Caco-2 (cell line): ENCODE measurements at regions of chr4 and their contacts with region 1.

Region 1: DNA sequence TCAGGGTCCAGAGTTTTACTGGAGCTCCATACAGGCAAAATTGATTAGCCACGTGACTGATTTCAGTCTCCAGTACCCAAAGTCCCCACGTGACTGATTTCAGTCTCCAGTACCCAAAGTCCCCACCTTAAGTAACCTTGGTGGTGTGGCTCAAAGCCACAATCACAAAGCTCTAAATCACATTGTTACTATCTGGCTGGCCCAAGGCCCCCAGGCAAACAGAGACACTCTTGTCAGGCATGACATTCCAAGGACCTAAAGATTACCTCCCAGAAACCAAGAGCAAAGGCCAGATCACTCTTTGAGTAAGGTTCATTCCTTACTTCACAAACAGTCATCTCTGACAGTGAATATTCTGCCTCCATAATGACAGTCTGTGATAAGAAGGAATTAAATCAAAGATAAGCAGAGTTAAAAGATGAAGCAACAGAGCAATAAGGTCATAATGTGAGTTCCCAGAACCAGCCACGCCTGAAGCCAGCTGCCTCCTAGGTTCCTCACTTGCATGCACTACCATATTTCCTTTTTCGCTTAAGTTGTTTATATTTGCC is 78.5 kb downstream of the ANXA3 start:
- DNase-seq: peak; percentile 84 to 93
- H3K4me3 ChIP-seq: no peak overlapping the region
- H3K4me3 Mint-ChIP-seq: peak overlapping the region; percentile 8
- H3K27ac Mint-ChIP-seq: peak overlapping the region; percentile 61
- H3K4me1 ChIP-seq: peaks cover 60% of the 10 kb centered on the region
- H3K4me1 Mint-ChIP-seq: peaks cover 34% of the 10 kb centered on the region
- H3K27me3 ChIP-seq: no peaks in the 10 kb centered on the region
- H3K27me3 Mint-ChIP-seq: no peaks in the 10 kb centered on the region
- CTCF ChIP-seq: no peak

Region 2: GRCh38 chr4:78551479-78552351 is 78.4 kb before region 1 on chr4 and contains the start of gene ANXA3:
- CTCF ChIA-PET with region 1: no interaction called
- POLR2A ChIA-PET with region 1: no interaction called
- intact Hi-C with region 1: loop called (anchors 1 kb)
- DNase-seq: peak; percentile 87 to 90
- H3K4me3 ChIP-seq: peak within 1 kb of the TSS; percentile 74
- H3K4me3 Mint-ChIP-seq: peak within 1 kb of the TSS; percentile 86
- H3K27ac Mint-ChIP-seq: peak within 1 kb of the TSS; percentile 90
- H3K4me1 ChIP-seq: peaks cover 55% of the 10 kb centered on the region
- H3K4me1 Mint-ChIP-seq: peaks cover 27% of the 10 kb centered on the region
- H3K27me3 ChIP-seq: no peaks in the 10 kb centered on the region
- H3K27me3 Mint-ChIP-seq: no peaks in the 10 kb centered on the region
- CTCF ChIP-seq: no peak
- total RNA-seq, gene ANXA3: 327 and 361 TPM in 2 replicates

Region 3: DNA sequence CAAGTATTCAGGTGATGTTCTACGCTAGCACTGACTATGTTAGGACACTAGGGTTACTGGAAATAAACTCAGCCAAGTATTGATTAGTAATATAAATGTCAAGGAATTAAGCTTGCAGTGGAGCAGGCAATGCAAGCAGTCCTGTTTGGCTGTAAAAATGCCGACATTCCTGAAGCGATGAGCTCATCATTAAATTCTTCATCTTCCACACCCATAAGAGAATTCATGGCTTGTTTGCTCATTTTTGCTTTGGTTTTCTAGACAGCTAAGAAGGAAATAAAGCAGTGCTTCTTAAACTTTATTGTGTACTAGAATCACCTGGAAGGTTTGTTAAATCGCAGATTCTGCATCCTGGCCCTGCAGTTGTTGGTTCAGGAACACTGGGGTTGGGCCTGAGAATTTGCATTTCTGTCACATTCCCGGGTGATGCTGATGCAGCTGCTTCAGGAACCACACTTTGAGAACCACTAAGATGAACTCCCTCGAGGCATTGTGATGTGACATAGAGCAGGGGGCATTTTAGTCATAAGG is 60.7 kb before region 1 on chr4:
- CTCF ChIA-PET with region 1: no interaction called
- POLR2A ChIA-PET with region 1: interaction called, 3 read pairs
- intact Hi-C with region 1: loop called (anchors 1 kb)
- DNase-seq: peak; percentile 65 to 70
- H3K4me3 ChIP-seq: no peak overlapping the region
- H3K4me3 Mint-ChIP-seq: peak overlapping the region; percentile 46
- H3K27ac Mint-ChIP-seq: peak overlapping the region; percentile 85
- H3K4me1 ChIP-seq: peaks cover 63% of the 10 kb centered on the region
- H3K4me1 Mint-ChIP-seq: peaks cover 40% of the 10 kb centered on the region
- H3K27me3 ChIP-seq: no peaks in the 10 kb centered on the region
- H3K27me3 Mint-ChIP-seq: no peaks in the 10 kb centered on the region
- CTCF ChIP-seq: no peak

Region 4: GRCh38 chr4:78612398-78613178 is 17.5 kb before region 1 on chr4:
- CTCF ChIA-PET with region 1: no interaction called
- POLR2A ChIA-PET with region 1: no interaction called
- intact Hi-C with region 1: loop called (anchors 2 kb)
- DNase-seq: no peak
- H3K4me3 ChIP-seq: no peak overlapping the region
- H3K4me3 Mint-ChIP-seq: no peak overlapping the region
- H3K27ac Mint-ChIP-seq: no peak overlapping the region
- H3K4me1 ChIP-seq: peaks cover 9% of the 10 kb centered on the region
- H3K4me1 Mint-ChIP-seq: peaks cover 41% of the 10 kb centered on the region
- H3K27me3 ChIP-seq: no peaks in the 10 kb centered on the region
- H3K27me3 Mint-ChIP-seq: no peaks in the 10 kb centered on the region
- CTCF ChIP-seq: peak in 1 of 2 experiments; percentile 20

Region 5: DNA sequence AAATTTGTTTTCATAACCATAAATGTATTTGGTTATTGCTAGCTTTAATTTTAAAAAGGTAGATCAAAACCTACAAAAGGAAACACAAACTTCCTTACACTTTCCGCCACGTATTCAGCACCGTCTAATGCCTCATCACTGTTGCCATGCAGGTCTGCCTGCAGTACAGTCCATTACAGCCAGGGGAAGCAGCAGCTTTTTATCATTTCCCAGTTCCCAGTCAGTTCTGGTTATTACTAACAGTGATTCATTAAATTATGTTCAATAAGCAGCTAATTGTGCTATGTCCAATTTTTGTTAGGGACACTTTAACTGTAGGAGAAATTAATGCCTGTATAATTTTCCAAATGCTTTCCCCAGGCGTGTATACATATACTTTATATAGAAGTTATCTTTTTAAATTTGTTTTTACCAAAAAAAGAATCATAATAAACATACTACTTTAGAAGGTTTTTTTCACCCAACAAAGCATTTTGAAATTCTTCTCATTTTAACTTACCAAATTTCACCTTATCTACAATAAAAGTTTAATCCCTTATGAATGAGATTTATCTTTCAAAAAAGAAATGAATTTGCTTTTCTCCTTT is 14.8 kb after region 1 on chr4:
- CTCF ChIA-PET with region 1: no interaction called
- POLR2A ChIA-PET with region 1: no interaction called
- intact Hi-C with region 1: loop called (anchors 2 kb)
- DNase-seq: peak; percentile 57 to 66
- H3K4me3 ChIP-seq: no peak overlapping the region
- H3K4me3 Mint-ChIP-seq: no peak overlapping the region
- H3K27ac Mint-ChIP-seq: no peak overlapping the region
- H3K4me1 ChIP-seq: peaks cover 7% of the 10 kb centered on the region
- H3K4me1 Mint-ChIP-seq: peaks cover 18% of the 10 kb centered on the region
- H3K27me3 ChIP-seq: no peaks in the 10 kb centered on the region
- H3K27me3 Mint-ChIP-seq: no peaks in the 10 kb centered on the region
- CTCF ChIP-seq: peak; percentile 67 to 86

Region 6: GRCh38 chr4:78661921-78662521 is 32.0 kb after region 1 on chr4:
- CTCF ChIA-PET with region 1: no interaction called
- POLR2A ChIA-PET with region 1: no interaction called
- intact Hi-C with region 1: loop called (anchors 1 kb)
- DNase-seq: peak in 1 of 2 experiments; percentile 32
- H3K4me3 ChIP-seq: no peak overlapping the region
- H3K4me3 Mint-ChIP-seq: no peak overlapping the region
- H3K27ac Mint-ChIP-seq: peak overlapping the region; percentile 33
- H3K4me1 ChIP-seq: peaks cover 5% of the 10 kb centered on the region; the same call in 1 of the 2 replicates
- H3K4me1 Mint-ChIP-seq: no peaks in the 10 kb centered on the region
- H3K27me3 ChIP-seq: no peaks in the 10 kb centered on the region
- H3K27me3 Mint-ChIP-seq: no peaks in the 10 kb centered on the region
- CTCF ChIP-seq: no peak

Region 7: GRCh38 chr4:78775303-78776030 is 145.4 kb after region 1 on chr4:
- CTCF ChIA-PET with region 1: no interaction called
- POLR2A ChIA-PET with region 1: interaction called, 4 read pairs
- intact Hi-C with region 1: loop called (anchors 5 kb)
- DNase-seq: peak; percentile 83 to 86
- H3K4me3 ChIP-seq: peak overlapping the region; percentile 57
- H3K4me3 Mint-ChIP-seq: peak overlapping the region; percentile 93
- H3K27ac Mint-ChIP-seq: peak overlapping the region; percentile 93
- H3K4me1 ChIP-seq: peaks cover 25% of the 10 kb centered on the region
- H3K4me1 Mint-ChIP-seq: no peaks in the 10 kb centered on the region
- H3K27me3 ChIP-seq: no peaks in the 10 kb centered on the region
- H3K27me3 Mint-ChIP-seq: no peaks in the 10 kb centered on the region
- CTCF ChIP-seq: no peak